AG04450 (cell line): ENCODE measurements at regions of chr13 and their contacts with region 1.

Region 1: DNA sequence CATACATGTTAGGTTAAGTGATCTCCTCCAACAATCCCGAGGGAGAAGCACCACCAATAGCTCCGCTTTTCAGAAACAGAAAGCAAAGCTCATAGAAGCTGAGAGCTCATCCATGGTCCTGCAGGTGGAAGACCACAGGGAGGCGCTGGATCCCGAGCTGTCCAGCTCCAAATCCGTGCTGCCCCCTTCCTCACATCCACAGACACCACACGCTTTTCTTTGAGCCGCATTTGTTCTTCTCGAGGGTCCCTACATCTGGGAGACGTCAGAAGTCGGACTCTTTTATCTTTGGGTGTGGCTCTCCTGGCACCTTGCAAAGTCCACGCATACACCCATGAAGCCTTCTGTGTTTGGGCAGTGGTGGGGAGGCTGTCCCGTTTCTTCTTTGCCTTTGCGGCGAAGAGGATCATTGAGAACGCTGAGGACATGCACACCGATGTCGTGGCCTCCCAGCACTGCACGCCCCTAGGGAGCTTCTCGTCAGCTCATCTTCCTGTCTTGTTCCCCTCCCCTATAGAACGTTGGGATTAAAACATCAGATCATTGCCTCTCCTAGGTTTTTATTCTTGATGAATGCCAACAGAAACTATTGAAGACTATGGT is 184.8 kb downstream of the TEX29 start:
- DNase-seq: no peak
- H3K4me3 ChIP-seq: no peak overlapping the region
- H3K27ac ChIP-seq: no peak overlapping the region
- H3K27me3 ChIP-seq: no peaks in the 10 kb centered on the region
- CTCF ChIP-seq: no peak

Region 2: DNA sequence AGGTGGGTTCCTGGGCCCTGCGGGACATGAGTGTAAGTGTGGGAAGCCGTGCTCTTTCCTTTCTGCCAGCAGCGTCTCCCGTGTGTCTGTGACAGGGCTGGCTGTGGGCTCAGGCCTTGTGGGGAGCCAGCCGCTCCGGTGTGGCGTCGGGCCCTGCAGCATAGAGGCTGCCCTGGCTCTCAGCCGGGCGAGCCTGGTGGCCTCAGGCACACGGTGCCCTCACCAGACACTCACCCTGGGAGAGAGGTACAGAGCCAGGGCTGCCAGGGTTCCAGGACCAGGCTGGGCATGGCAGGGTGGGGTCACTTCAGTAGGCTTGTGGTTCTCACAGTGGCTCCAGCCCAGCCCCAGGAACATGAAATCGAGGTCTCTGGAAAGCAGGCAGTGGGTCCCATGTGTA is 139.9 kb after region 1 on chr13:
- CTCF ChIA-PET with region 1: interaction called, 17 read pairs
- POLR2A ChIA-PET with region 1: no interaction called
- DNase-seq: no peak
- H3K4me3 ChIP-seq: no peak overlapping the region
- H3K27ac ChIP-seq: no peak overlapping the region
- H3K27me3 ChIP-seq: no peaks in the 10 kb centered on the region
- CTCF ChIP-seq: no peak

Region 3: DNA sequence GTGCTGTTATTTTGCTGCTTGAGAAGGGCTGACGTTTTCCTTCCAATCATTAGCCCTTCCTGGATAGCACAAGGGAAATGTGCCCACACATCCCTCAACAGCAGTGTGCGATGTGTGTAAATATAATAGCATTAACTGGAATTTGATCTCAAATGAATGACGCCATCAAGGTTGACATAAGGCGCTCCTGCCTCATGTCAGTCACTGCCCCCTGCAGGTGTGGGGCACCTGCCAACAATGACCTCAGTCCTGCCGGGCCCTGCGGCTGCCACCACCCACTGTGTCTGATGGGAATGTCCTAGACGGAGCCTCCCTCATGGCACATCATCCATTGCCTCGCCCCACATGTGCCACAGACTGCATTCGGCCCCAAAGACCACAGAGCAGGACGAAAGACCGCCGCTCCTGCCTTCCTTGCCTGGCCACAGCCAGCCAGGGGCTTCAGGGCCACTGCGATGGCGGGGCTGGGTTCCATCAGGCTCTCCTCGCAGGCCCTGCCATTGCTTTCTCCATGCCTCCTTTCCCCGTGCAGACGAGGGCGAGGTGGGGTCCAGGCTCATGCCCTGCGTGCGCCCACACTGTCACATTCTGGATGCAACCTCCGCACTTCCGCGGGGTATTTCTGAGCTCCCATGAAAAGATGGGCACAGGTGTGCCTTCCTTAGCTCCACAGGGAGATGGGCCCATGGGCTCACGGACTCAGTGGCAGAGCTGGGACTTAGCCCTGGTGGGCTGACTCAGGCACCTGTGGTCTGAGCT is 708.4 kb after region 1 on chr13:
- CTCF ChIA-PET with region 1: no interaction called
- POLR2A ChIA-PET with region 1: no interaction called
- DNase-seq: no peak
- H3K4me3 ChIP-seq: no peak overlapping the region
- H3K27ac ChIP-seq: no peak overlapping the region
- H3K27me3 ChIP-seq: no peaks in the 10 kb centered on the region
- CTCF ChIP-seq: no peak